CD4-positive, alpha-beta T cell (primary cell): ENCODE measurements at regions of chr7 and their contacts with region 1.

Region 1: GRCh38 chr7:30478349-30479201 is at the start of gene NOD1:
- DNase-seq: peak; percentile 38 to 80 (median 58)
- ATAC-seq: peak; percentile 87
- H3K4me3 ChIP-seq: peak within 1 kb of the TSS; percentile 76
- H3K4me3 Mint-ChIP-seq: no peak within 1 kb of the TSS
- H3K27ac ChIP-seq: peak within 1 kb of the TSS; percentile 60 to 65
- H3K27ac Mint-ChIP-seq: no peak within 1 kb of the TSS
- H3K4me1 ChIP-seq: peaks cover 31% of the 10 kb centered on the region
- H3K4me1 Mint-ChIP-seq: peaks cover 49% of the 10 kb centered on the region
- H3K27me3 ChIP-seq: no peaks in the 10 kb centered on the region
- H3K27me3 Mint-ChIP-seq: no peaks in the 10 kb centered on the region
- CTCF ChIP-seq: no peak
- total RNA-seq, gene NOD1: 11.6 to 12.6 TPM

Region 2: GRCh38 chr7:30406664-30407425 is 71.7 kb before region 1 on chr7:
- CTCF ChIA-PET with region 1: no interaction called
- POLR2A ChIA-PET with region 1: no interaction called
- intact Hi-C with region 1: no loop called
- DNase-seq: no peak
- ATAC-seq: no peak
- H3K4me3 ChIP-seq: no peak overlapping the region
- H3K4me3 Mint-ChIP-seq: no peak overlapping the region
- H3K27ac ChIP-seq: no peak overlapping the region
- H3K27ac Mint-ChIP-seq: no peak overlapping the region
- H3K4me1 ChIP-seq: no peaks in the 10 kb centered on the region
- H3K4me1 Mint-ChIP-seq: no peaks in the 10 kb centered on the region
- H3K27me3 ChIP-seq: no peaks in the 10 kb centered on the region
- H3K27me3 Mint-ChIP-seq: no peaks in the 10 kb centered on the region
- CTCF ChIP-seq: no peak

Region 3: GRCh38 chr7:30504347-30505173 is 26.0 kb after region 1 on chr7 and contains the start of gene GGCT:
- CTCF ChIA-PET with region 1: interaction called, 6 read pairs
- POLR2A ChIA-PET with region 1: interaction called, 19 read pairs
- intact Hi-C with region 1: loop called (anchors 2 kb)
- DNase-seq: peak; percentile 93 to 98 (median 95)
- ATAC-seq: peak; percentile 98
- H3K4me3 ChIP-seq: peak within 1 kb of the TSS; percentile 88
- H3K4me3 Mint-ChIP-seq: peak within 1 kb of the TSS; percentile 94
- H3K27ac ChIP-seq: peak within 1 kb of the TSS; percentile 42 to 57
- H3K27ac Mint-ChIP-seq: peak within 1 kb of the TSS; percentile 74
- H3K4me1 ChIP-seq: peaks cover 19% of the 10 kb centered on the region
- H3K4me1 Mint-ChIP-seq: peaks cover 29% of the 10 kb centered on the region
- H3K27me3 ChIP-seq: no peaks in the 10 kb centered on the region
- H3K27me3 Mint-ChIP-seq: no peaks in the 10 kb centered on the region
- CTCF ChIP-seq: no peak
- total RNA-seq, gene GGCT: 6.3 to 6.6 TPM

Region 4: DNA sequence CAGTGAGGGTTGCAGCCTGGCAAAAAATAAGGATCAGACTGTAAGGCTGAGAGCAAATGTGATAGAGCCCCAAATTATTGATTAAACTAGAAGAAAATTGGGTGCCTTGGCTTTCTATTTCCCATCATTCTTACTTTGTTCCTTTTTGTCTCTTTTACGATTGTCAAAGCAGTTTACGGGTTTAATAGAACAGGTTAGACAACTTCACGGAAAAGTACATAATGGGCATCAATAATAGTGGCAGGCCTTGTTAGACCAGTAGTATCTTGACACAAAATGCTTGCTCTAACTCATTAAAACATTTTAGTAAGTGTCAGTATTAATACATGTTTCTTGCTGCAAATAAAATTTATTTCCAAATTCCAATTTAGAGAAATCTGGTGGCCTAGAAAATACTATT is 40.5 kb after region 1 on chr7:
- CTCF ChIA-PET with region 1: no interaction called
- POLR2A ChIA-PET with region 1: no interaction called
- intact Hi-C with region 1: no loop called
- DNase-seq: no peak
- ATAC-seq: no peak
- H3K4me3 ChIP-seq: no peak overlapping the region
- H3K4me3 Mint-ChIP-seq: no peak overlapping the region
- H3K27ac ChIP-seq: no peak overlapping the region
- H3K27ac Mint-ChIP-seq: no peak overlapping the region
- H3K4me1 ChIP-seq: no peaks in the 10 kb centered on the region
- H3K4me1 Mint-ChIP-seq: no peaks in the 10 kb centered on the region
- H3K27me3 ChIP-seq: no peaks in the 10 kb centered on the region
- H3K27me3 Mint-ChIP-seq: no peaks in the 10 kb centered on the region
- CTCF ChIP-seq: no peak